WTC11 (cell line): ENCODE measurements at regions of chr14 and their contacts with region 1.

Region 1: DNA sequence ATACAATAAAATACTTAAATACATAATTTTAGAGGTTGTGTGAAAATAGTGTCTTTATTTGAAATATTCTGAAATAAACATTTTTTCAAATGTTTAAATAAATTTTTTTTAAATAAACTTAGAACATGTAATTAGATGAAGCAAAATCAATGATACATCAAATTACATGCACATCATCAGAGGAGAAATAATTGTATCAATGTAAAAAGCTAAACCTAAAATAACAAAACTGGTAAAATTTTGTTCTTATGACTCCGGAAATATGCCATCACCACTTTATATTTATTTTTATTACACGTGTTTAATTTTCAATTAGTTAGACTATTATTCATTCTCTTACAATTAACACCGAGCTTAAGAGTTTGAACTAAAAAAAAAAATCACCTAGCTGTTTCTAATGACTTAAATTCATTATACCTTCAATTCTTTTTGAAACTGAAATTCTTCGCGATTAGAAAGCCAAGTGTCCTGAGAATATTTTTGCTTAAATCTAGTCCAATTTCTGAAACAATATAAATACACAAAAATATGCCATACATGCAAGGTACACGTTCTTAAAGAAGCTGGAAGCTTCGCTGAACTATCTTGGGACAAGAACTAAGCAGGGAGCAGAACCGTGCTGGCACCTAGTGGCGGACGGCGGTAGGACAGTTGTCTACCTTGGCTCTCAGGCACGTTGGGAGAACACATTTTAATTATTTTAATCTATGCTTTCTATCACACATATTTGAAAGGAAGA is 230.5 kb downstream of the SLC25A21 start:
- DNase-seq: peak; percentile 82
- ATAC-seq: peak; percentile 88
- H3K4me3 Mint-ChIP-seq: no peak overlapping the region
- H3K27ac Mint-ChIP-seq: no peak overlapping the region
- H3K4me1 Mint-ChIP-seq: peaks cover 5% of the 10 kb centered on the region; the same call in 1 of the 2 replicates
- H3K27me3 Mint-ChIP-seq: no peaks in the 10 kb centered on the region
- CTCF ChIP-seq: peak; percentile 95

Region 2: DNA sequence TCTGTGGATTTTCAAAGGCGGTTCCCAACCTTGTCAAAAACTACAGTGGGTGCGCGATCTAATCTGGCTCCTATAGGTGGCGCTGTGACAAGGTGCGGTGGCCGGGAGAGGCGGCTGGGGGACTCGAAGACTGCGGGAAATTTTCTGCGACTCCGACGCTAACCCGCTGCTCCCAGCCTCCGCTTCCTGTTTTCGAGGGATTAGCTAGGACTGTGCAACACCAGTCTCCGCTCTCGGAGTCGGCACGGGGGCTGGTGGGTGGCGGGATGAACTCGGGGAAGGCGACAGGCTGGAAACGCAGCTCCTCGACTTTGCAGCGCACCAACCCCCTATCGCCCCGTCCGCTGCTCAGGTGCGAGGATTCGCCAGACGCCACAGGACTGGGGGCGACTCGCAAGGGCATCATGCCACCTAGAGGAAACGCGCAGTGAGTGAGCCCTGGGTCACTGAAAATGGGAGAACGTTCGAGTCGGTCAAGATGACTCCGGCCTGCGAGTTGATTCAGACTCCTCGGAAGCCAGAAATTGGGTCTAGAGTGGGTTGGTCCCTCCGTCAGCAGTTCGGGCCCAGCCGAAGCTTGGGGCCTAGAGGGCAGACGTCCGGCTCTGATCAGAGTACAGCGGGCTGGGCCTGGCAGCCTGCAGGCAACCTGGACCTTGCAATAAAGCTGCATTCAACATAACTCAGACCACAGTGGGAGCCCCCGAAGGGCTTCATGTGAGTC is 285.8 kb before region 1 on chr14:
- CTCF ChIA-PET with region 1: interaction called, 31 read pairs
- POLR2A ChIA-PET with region 1: interaction called, 3 read pairs
- DNase-seq: peak; percentile 84
- ATAC-seq: peak; percentile 43
- H3K4me3 Mint-ChIP-seq: peak overlapping the region; percentile 55
- H3K27ac Mint-ChIP-seq: no peak overlapping the region
- H3K4me1 Mint-ChIP-seq: peaks cover 48% of the 10 kb centered on the region
- H3K27me3 Mint-ChIP-seq: peaks cover 100% of the 10 kb centered on the region
- CTCF ChIP-seq: peak; percentile 88

Region 3: GRCh38 chr14:36747411-36748184 is 194.4 kb before region 1 on chr14:
- CTCF ChIA-PET with region 1: interaction called, 23 read pairs
- POLR2A ChIA-PET with region 1: no interaction called
- DNase-seq: no peak
- ATAC-seq: peak; percentile 77
- H3K4me3 Mint-ChIP-seq: no peak overlapping the region
- H3K27ac Mint-ChIP-seq: no peak overlapping the region
- H3K4me1 Mint-ChIP-seq: 0 out of 2 replicates have a peak, but pooled peaks cover 9% of the 10 kb centered on the region
- H3K27me3 Mint-ChIP-seq: no peaks in the 10 kb centered on the region
- CTCF ChIP-seq: peak; percentile 72

Region 4: GRCh38 chr14:36767603-36768281 is 174.2 kb before region 1 on chr14:
- CTCF ChIA-PET with region 1: interaction called, 15 read pairs
- POLR2A ChIA-PET with region 1: interaction called, 3 read pairs
- DNase-seq: no peak
- ATAC-seq: peak; percentile 73
- H3K4me3 Mint-ChIP-seq: peak overlapping the region; percentile 11; the same call in 1 of the 2 replicates
- H3K27ac Mint-ChIP-seq: peak overlapping the region; percentile 93
- H3K4me1 Mint-ChIP-seq: peaks cover 30% of the 10 kb centered on the region
- H3K27me3 Mint-ChIP-seq: no peaks in the 10 kb centered on the region
- CTCF ChIP-seq: no peak

Region 5: GRCh38 chr14:36931796-36932195 is 10.2 kb before region 1 on chr14:
- CTCF ChIA-PET with region 1: interaction called, 14 read pairs
- POLR2A ChIA-PET with region 1: no interaction called
- DNase-seq: no peak
- ATAC-seq: no peak
- H3K4me3 Mint-ChIP-seq: no peak overlapping the region
- H3K27ac Mint-ChIP-seq: no peak overlapping the region
- H3K4me1 Mint-ChIP-seq: peaks cover 8% of the 10 kb centered on the region
- H3K27me3 Mint-ChIP-seq: no peaks in the 10 kb centered on the region
- CTCF ChIP-seq: no peak

Region 6: DNA sequence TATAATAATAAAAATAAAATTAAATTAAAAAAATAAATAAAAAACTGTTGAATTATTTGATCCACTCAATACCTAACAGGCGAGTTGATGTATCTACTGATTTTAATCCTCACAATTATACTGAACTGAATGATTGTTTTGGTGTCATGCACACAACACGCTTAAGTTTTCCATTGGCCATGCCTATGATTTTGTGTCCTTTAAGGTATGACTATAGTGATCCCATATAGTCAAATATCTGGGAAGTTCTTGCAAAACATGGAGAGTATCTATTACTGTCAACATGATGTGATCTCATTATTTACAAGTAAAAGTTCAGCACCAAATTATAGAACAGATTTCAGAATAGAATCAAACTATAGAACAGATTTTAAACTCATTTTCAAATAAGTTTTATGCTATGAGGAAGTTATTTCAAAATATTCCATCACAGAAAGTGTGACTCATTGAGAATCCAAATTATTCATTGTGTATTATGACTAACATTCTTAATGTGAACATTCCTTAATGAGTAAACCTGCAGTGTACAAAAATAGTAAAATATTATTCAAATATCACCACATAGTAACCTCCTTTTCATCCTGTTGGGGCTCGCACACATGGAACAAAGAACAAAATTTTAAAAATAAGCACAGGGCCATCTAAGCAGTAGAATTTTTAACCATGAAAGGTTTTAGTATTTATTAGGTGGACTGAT is 40.0 kb after region 1 on chr14:
- CTCF ChIA-PET with region 1: no interaction called
- POLR2A ChIA-PET with region 1: no interaction called
- DNase-seq: no peak
- ATAC-seq: no peak
- H3K4me3 Mint-ChIP-seq: no peak overlapping the region
- H3K27ac Mint-ChIP-seq: no peak overlapping the region
- H3K4me1 Mint-ChIP-seq: peaks cover 7% of the 10 kb centered on the region; the same call in 1 of the 2 replicates
- H3K27me3 Mint-ChIP-seq: no peaks in the 10 kb centered on the region
- CTCF ChIP-seq: no peak

Region 7: DNA sequence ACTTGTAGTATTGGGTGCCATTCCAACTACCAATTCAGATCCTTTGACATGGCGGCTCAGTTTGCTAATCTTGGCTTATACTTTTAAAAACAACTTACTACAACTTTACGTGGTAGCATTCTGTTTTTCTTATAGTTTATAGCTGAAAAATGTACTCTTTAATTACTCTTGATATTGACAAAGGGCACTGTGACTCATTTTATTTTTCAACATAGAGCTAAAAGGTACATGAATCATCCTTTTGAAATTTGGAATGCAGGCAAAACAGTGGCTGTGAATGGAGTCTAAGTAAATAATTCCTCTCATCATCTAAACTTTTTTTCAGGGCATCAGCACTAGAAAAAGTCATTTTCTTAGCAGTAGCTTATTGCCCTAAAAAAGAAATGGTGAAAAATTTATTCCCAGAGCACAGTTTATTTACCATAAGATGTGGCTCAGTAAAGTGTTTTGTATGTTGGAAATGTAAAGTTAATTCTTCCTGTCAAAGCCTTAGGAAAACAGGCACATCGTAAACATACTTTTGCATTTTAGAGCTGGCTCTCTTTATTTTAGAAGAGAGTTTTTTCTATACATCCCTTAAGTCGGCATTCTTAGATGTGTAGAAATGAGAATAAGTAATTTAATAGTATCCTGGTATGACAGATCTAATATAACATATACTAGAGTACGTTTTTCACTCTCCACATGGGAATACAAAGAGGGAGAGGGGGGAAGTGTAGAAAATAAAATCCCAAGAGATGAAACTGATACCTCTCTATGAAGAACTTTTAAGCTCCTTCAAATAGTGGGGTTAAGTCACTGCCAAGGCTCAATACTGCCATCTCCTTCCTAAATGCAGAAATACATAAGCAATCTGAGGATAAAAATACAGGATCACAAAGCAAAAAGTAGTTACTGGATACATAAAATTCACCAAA is 175.2 kb after region 1 on chr14:
- CTCF ChIA-PET with region 1: interaction called, 21 read pairs
- POLR2A ChIA-PET with region 1: no interaction called
- DNase-seq: no peak
- ATAC-seq: peak; percentile 46; the same call in 1 of the 2 replicates
- H3K4me3 Mint-ChIP-seq: no peak overlapping the region
- H3K27ac Mint-ChIP-seq: no peak overlapping the region
- H3K4me1 Mint-ChIP-seq: peaks cover 18% of the 10 kb centered on the region
- H3K27me3 Mint-ChIP-seq: no peaks in the 10 kb centered on the region
- CTCF ChIP-seq: no peak

Region 8: GRCh38 chr14:37150414-37150813 is 208.5 kb after region 1 on chr14:
- CTCF ChIA-PET with region 1: interaction called, 15 read pairs
- POLR2A ChIA-PET with region 1: no interaction called
- DNase-seq: no peak
- ATAC-seq: peak; percentile 68
- H3K4me3 Mint-ChIP-seq: no peak overlapping the region
- H3K27ac Mint-ChIP-seq: no peak overlapping the region
- H3K4me1 Mint-ChIP-seq: no peaks in the 10 kb centered on the region
- H3K27me3 Mint-ChIP-seq: no peaks in the 10 kb centered on the region
- CTCF ChIP-seq: peak; percentile 63